ENCODE measurements at regions of chr1 and their contacts with region 1.

Region 1: GRCh38 chr1:181479137-181479745 is 4.1 kb upstream of the CACNA1E start:
- DNase-seq: peak; percentile 34
- H3K4me3 Mint-ChIP-seq: no peak overlapping the region
- H3K27ac Mint-ChIP-seq: no peak overlapping the region
- H3K4me1 Mint-ChIP-seq: peaks cover 10% of the 10 kb centered on the region
- H3K27me3 Mint-ChIP-seq: peaks cover 25% of the 10 kb centered on the region

Region 2: GRCh38 chr1:181676269-181676668 is 197.0 kb after region 1 on chr1:
- CTCF ChIA-PET with region 1: interaction called, 12 read pairs
- intact Hi-C with region 1: loop called (anchors 1 kb)
- DNase-seq: peak; percentile 28
- H3K4me3 Mint-ChIP-seq: no peak overlapping the region
- H3K27ac Mint-ChIP-seq: no peak overlapping the region
- H3K4me1 Mint-ChIP-seq: no peaks in the 10 kb centered on the region
- H3K27me3 Mint-ChIP-seq: peaks cover 9% of the 10 kb centered on the region

Region 3: DNA sequence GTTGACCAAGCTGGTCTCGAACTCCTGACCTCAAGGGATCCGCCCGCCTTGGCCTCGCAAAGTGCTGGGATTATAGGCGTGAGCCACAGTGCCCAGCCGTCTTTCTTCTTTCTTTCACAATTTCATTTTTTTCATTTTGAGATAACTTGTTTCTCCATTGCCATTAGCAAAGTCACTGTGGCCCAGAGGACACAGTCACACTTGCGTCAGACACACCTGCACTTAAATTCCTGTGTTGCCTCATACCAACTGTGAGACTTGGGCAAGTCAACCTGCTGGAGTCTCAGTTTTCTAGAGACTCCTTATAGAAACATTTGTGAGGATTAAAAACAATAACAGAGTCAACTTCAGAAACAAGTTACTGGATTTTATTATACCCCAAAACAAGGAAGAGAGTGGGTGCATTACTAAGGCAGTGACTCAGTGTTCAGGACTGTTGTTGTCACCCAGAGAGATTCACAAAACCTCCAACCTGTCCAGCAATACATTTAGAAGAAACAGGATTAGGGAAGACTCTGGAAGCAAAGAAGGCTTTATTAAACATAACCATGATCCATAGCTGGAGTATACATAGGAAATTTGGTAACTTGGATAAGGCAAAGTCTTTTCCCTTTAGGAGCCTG is 918.6 kb after region 1 on chr1:
- CTCF ChIA-PET with region 1: interaction called, 3 read pairs
- intact Hi-C with region 1: loop called (anchors 1 kb)
- DNase-seq: no peak
- H3K4me3 Mint-ChIP-seq: no peak overlapping the region
- H3K27ac Mint-ChIP-seq: no peak overlapping the region
- H3K4me1 Mint-ChIP-seq: no peaks in the 10 kb centered on the region
- H3K27me3 Mint-ChIP-seq: no peaks in the 10 kb centered on the region